ENCODE measurements at regions of chr2 and their contacts with region 1.

Region 1: GRCh38 chr2:10821296-10821695 is 8.7 kb upstream of the PDIA6 start:
- DNase-seq: no peak
- ATAC-seq: peak in 3 of 4 donors; percentile 33 to 57 (median 52)
- H3K4me3 ChIP-seq: no peak overlapping the region
- H3K27ac ChIP-seq: peak overlapping the region in 1 of 12 donors; percentile 60
- H3K4me1 ChIP-seq: peaks cover 0 to 25% (median 6%) of the 10 kb centered on the region in 12 donors
- H3K27me3 ChIP-seq: peaks cover 0 to under 1% (median 0%) of the 10 kb centered on the region in 9 donors
- CTCF ChIP-seq: no peak
- POLR2A ChIP-seq: no peak

Region 2: GRCh38 chr2:10717613-10718012 is 103.7 kb before region 1 on chr2:
- intact Hi-C with region 1: loop called in 2 of 10 experiments (anchors 10 kb)
- DNase-seq: no peak
- ATAC-seq: no peak
- H3K4me3 ChIP-seq: no peak overlapping the region
- H3K27ac ChIP-seq: no peak overlapping the region
- H3K4me1 ChIP-seq: peaks cover 0 to 18% (median 9%) of the 10 kb centered on the region in 12 donors
- H3K27me3 ChIP-seq: peaks cover 14 to 31% (median 23%) of the 10 kb centered on the region in 9 donors
- CTCF ChIP-seq: no peak
- POLR2A ChIP-seq: no peak

Region 3: GRCh38 chr2:10777842-10778723 is 43.2 kb before region 1 on chr2:
- intact Hi-C with region 1: no loop called
- DNase-seq: peak in 2 of 5 donors; percentile 25 to 51
- ATAC-seq: peak in 3 of 4 donors; percentile 23 to 43 (median 30)
- H3K4me3 ChIP-seq: no peak overlapping the region
- H3K27ac ChIP-seq: peak overlapping the region in 3 of 12 donors; percentile 6 to 45 (median 44)
- H3K4me1 ChIP-seq: peaks cover 0 to 28% (median 13%) of the 10 kb centered on the region in 12 donors
- H3K27me3 ChIP-seq: no peaks in the 10 kb centered on the region
- CTCF ChIP-seq: no peak
- POLR2A ChIP-seq: no peak